ENCODE measurements at regions of chr12 and their contacts with region 1.

Region 1: GRCh38 chr12:16685107-16685506 is 79.1 kb upstream of the LMO3 start:
- DNase-seq: no peak
- ATAC-seq: no peak; the same call in 2 of the 3 replicates
- H3K4me3 ChIP-seq: no peak overlapping the region
- H3K27ac ChIP-seq: no peak overlapping the region
- H3K4me1 ChIP-seq: no peaks in the 10 kb centered on the region
- H3K27me3 ChIP-seq: no peaks in the 10 kb centered on the region
- CTCF ChIP-seq: peak in 2 of 3 experiments; percentile 21 to 27; a peak in 2 of 6 replicates
- EP300 ChIP-seq: no peak
- POLR2A ChIP-seq: no peak
- RAD21 ChIP-seq: peak; percentile 58

Region 2: DNA sequence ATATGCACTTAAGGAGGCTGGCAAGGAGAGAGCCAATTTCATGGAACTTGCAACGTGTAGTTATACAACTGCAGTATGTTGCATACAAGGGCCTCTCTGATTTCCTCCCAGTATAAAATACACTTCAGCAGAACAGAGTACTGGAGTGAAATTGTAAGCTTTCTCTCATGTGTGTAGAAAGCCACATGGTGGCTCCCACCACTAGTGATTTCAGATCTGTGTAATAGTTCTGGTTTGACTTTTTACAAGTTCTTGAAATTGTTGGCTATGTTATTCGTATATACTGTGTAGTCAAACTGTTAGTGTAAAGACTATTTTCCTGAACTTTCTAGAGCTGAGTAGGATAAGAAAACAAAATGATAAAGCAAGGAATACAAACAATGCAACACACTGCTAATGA is 62.8 kb before region 1 on chr12:
- CTCF ChIA-PET with region 1: interaction called, 6 read pairs
- POLR2A ChIA-PET with region 1: no interaction called
- RAD21 ChIA-PET with region 1: interaction called, 10 read pairs
- SMC1A ChIA-PET with region 1: interaction called, 4 read pairs
- in situ Hi-C with region 1: no loop called
- intact Hi-C with region 1: no loop called
- DNase-seq: no peak
- ATAC-seq: peak; percentile 79
- H3K4me3 ChIP-seq: no peak overlapping the region
- H3K27ac ChIP-seq: no peak overlapping the region
- H3K4me1 ChIP-seq: no peaks in the 10 kb centered on the region
- H3K27me3 ChIP-seq: no peaks in the 10 kb centered on the region
- CTCF ChIP-seq: peak; percentile 12 to 48 (median 12); a peak in 4 of 6 replicates
- EP300 ChIP-seq: no peak
- POLR2A ChIP-seq: no peak
- RAD21 ChIP-seq: peak; percentile 65